ENCODE measurements at regions of chr18 and their contacts with region 1.

Region 1: DNA sequence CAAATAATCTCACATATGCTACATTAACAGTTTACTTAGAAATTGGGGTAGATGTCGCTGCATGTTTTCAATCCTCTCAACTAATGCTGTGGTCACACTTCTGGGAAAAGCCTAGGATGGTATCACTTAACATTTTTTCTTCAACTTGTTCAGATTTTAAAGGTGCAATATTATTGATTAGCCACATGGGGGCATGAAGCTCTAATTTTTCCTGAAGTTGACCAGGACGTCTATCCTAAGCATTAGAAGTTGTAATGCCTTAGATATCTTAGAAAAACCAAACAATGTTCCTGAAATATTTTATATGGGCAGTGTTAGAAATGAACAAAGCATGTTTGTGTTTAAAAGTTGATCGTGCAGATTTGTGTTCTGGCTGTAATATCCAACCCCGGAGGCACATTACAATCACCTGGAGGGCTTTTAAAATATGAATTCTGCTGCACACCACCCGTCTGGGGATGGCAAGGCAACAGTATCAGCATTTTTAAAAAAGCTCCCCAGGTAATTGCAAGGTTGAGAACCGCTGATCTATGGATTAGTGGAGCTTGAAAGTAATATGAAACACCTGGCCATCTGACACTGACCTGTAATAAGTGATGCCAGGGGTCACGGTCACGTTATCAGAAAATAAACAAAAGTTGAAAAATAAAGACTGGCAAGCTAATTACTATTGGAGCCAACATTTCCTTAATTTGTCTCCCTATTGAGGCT is 100.5 kb upstream of the LMAN1 start:
- DNase-seq: no peak
- H3K4me3 Mint-ChIP-seq: no peak overlapping the region
- H3K27ac Mint-ChIP-seq: no peak overlapping the region
- H3K4me1 Mint-ChIP-seq: no peaks in the 10 kb centered on the region
- H3K27me3 Mint-ChIP-seq: peaks cover 15% of the 10 kb centered on the region

Region 2: GRCh38 chr18:58998401-58999203 is 460.9 kb before region 1 on chr18:
- CTCF ChIA-PET with region 1: no interaction called
- intact Hi-C with region 1: no loop called
- DNase-seq: no peak
- H3K4me3 Mint-ChIP-seq: no peak overlapping the region
- H3K27ac Mint-ChIP-seq: no peak overlapping the region
- H3K4me1 Mint-ChIP-seq: no peaks in the 10 kb centered on the region
- H3K27me3 Mint-ChIP-seq: peaks cover 6% of the 10 kb centered on the region

Region 3: GRCh38 chr18:59109375-59109774 is 350.1 kb before region 1 on chr18:
- CTCF ChIA-PET with region 1: no interaction called
- intact Hi-C with region 1: no loop called
- DNase-seq: no peak
- H3K4me3 Mint-ChIP-seq: no peak overlapping the region
- H3K27ac Mint-ChIP-seq: no peak overlapping the region
- H3K4me1 Mint-ChIP-seq: no peaks in the 10 kb centered on the region
- H3K27me3 Mint-ChIP-seq: peaks cover 48% of the 10 kb centered on the region

Region 4: GRCh38 chr18:59395226-59396110 is 64.1 kb before region 1 on chr18:
- CTCF ChIA-PET with region 1: no interaction called
- intact Hi-C with region 1: no loop called
- DNase-seq: no peak
- H3K4me3 Mint-ChIP-seq: no peak overlapping the region
- H3K27ac Mint-ChIP-seq: no peak overlapping the region
- H3K4me1 Mint-ChIP-seq: peaks cover 5% of the 10 kb centered on the region
- H3K27me3 Mint-ChIP-seq: peaks cover 15% of the 10 kb centered on the region

Region 5: GRCh38 chr18:59446012-59446411 is 13.5 kb before region 1 on chr18:
- CTCF ChIA-PET with region 1: interaction called, 16 read pairs
- intact Hi-C with region 1: no loop called
- DNase-seq: no peak
- H3K4me3 Mint-ChIP-seq: no peak overlapping the region
- H3K27ac Mint-ChIP-seq: no peak overlapping the region
- H3K4me1 Mint-ChIP-seq: no peaks in the 10 kb centered on the region
- H3K27me3 Mint-ChIP-seq: peaks cover 3% of the 10 kb centered on the region

Region 6: GRCh38 chr18:59484837-59485328 is 25.4 kb after region 1 on chr18:
- CTCF ChIA-PET with region 1: interaction called, 11 read pairs
- intact Hi-C with region 1: no loop called
- DNase-seq: no peak
- H3K4me3 Mint-ChIP-seq: no peak overlapping the region
- H3K27ac Mint-ChIP-seq: no peak overlapping the region
- H3K4me1 Mint-ChIP-seq: no peaks in the 10 kb centered on the region
- H3K27me3 Mint-ChIP-seq: peaks cover 8% of the 10 kb centered on the region

Region 7: GRCh38 chr18:59514203-59514602 is 54.7 kb after region 1 on chr18:
- CTCF ChIA-PET with region 1: no interaction called
- intact Hi-C with region 1: no loop called
- DNase-seq: no peak
- H3K4me3 Mint-ChIP-seq: no peak overlapping the region
- H3K27ac Mint-ChIP-seq: no peak overlapping the region
- H3K4me1 Mint-ChIP-seq: no peaks in the 10 kb centered on the region
- H3K27me3 Mint-ChIP-seq: peaks cover 10% of the 10 kb centered on the region

Region 8: GRCh38 chr18:59823596-59824195 is 364.2 kb after region 1 on chr18:
- CTCF ChIA-PET with region 1: interaction called, 37 read pairs
- intact Hi-C with region 1: loop called (anchors 1 kb)
- DNase-seq: peak; percentile 78
- H3K4me3 Mint-ChIP-seq: no peak overlapping the region
- H3K27ac Mint-ChIP-seq: no peak overlapping the region
- H3K4me1 Mint-ChIP-seq: no peaks in the 10 kb centered on the region
- H3K27me3 Mint-ChIP-seq: peaks cover 2% of the 10 kb centered on the region

Region 9: GRCh38 chr18:60549338-60549960 is 1089.9 kb after region 1 on chr18:
- CTCF ChIA-PET with region 1: interaction called, 5 read pairs
- intact Hi-C with region 1: loop called (anchors 1 kb)
- DNase-seq: peak; percentile 20
- H3K4me3 Mint-ChIP-seq: no peak overlapping the region
- H3K27ac Mint-ChIP-seq: no peak overlapping the region
- H3K4me1 Mint-ChIP-seq: no peaks in the 10 kb centered on the region
- H3K27me3 Mint-ChIP-seq: no peaks in the 10 kb centered on the region